ENCODE measurements at regions of chr7 and their contacts with region 1.

Region 1: DNA sequence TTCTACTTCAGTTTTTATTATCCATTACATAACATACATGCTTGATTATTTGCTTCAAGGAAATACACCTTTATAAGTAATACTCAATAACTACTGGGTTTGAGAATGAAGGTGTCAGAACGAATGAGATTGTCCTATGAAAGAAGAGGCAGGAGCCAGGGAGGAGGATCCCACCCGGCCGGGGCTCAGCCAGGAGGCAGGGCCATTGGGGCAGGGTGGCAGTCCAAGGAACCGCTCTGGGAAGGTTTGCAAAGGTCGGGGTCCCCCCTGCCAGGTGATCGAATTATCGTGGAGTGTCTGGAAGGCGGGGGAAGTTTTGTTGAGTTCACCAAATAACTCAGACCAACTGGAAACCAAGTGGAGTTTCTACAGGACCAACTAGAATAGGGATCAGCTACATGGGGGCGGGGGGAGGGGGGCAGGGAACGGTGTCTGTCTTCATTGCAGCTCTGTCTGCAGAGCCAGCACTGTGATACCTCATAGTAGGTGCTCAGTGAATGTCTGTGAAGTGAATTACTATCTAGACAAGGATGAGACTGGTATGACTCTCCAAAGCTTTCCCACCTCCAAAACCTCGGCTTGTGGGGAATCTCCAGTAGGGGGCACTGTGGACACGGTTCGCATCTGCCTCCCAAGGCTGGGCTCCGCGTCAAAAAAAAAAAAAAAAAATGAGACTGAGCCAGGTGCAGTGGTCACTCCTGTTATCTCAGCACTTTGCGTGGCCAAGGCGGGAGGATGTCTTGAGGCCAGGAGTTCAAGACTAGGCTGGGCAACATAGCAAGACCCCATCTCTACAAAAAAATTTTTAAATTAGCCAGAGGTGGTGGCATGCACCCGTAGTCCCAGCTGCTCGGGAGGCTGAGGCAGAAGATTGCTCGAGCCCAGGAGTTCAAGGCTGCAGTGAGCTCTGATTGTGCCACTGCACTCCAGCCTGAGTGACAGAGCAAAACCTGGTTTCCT is 9.4 kb downstream of the TRIM56 start:
- DNase-seq: peak; percentile 60 to 79
- ATAC-seq: peak; percentile 83 to 85
- H3K4me3 ChIP-seq: no peak overlapping the region
- H3K27ac ChIP-seq: peak overlapping the region; percentile 50 to 94
- H3K4me1 ChIP-seq: peaks cover 35% of the 10 kb centered on the region
- CTCF ChIP-seq: peak; percentile 84
- EP300 ChIP-seq: no peak
- POLR2A ChIP-seq: no peak
- RAD21 ChIP-seq: peak; percentile 82 to 86

Region 2: GRCh38 chr7:101108330-101108857 is 13.7 kb after region 1 on chr7:
- CTCF ChIA-PET with region 1: interaction called, 14 read pairs
- POLR2A ChIA-PET with region 1: no interaction called
- DNase-seq: no peak
- ATAC-seq: peak in 1 of 2 experiments; percentile 22; a peak in 4 of 6 replicates
- H3K4me3 ChIP-seq: no peak overlapping the region
- H3K27ac ChIP-seq: peak overlapping the region; percentile 74 to 94
- H3K4me1 ChIP-seq: peaks cover 39% of the 10 kb centered on the region
- CTCF ChIP-seq: no peak
- EP300 ChIP-seq: no peak
- POLR2A ChIP-seq: no peak
- RAD21 ChIP-seq: no peak

Region 3: GRCh38 chr7:101114492-101114891 is 19.8 kb after region 1 on chr7:
- CTCF ChIA-PET with region 1: interaction called, 600 read pairs
- POLR2A ChIA-PET with region 1: interaction called, 41 read pairs
- DNase-seq: no peak
- ATAC-seq: no peak; a peak in 1 of 6 replicates
- H3K4me3 ChIP-seq: no peak overlapping the region
- H3K27ac ChIP-seq: peak overlapping the region; percentile 94 to 95
- H3K4me1 ChIP-seq: peaks cover 52% of the 10 kb centered on the region
- CTCF ChIP-seq: no peak
- EP300 ChIP-seq: no peak
- POLR2A ChIP-seq: no peak
- RAD21 ChIP-seq: no peak